ENCODE measurements at regions of chr2 and their contacts with region 1.

Region 1: DNA sequence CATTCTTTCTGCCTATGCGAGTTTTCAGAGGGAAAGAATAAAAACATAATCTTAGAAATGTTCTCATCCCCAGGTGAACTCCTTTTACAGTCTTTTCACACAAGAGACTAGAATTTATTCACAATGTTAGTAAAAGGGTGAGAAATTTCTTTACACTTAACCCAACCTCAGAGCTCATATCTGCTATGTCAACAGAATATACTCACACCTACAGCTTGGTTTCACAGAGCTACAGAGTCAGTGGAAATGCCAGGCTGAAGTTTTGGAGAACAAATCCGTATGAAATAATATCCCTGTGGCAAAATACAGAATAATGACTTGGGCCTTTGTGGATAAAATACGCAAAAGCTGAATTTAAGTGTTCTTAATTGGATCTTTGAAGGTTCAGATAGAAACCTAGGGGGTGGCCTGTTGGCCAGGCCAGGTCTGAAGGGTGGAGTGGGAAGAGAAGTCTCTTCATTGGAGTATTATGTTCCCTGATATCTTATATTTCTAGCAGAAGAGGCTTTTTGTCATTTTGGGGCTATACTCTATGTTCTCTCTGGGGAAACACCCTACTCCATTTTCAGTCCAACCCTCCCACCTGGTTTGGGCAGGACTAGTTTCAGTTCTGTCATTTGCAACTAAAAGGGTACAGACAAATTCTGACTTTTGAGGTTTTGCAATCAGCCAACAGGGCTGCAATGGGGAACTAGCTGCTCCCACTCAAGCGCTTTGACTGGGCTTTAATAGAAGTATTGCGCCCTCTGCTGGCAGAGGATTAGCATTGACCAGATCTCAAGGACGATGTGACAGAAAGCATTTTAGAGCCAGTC is 25.7 kb downstream of the FBXO48 start:
- DNase-seq: peak; percentile 85
- ATAC-seq: peak; percentile 99
- H3K4me3 ChIP-seq: no peak overlapping the region
- H3K27ac ChIP-seq: no peak overlapping the region
- H3K4me1 ChIP-seq: no peaks in the 10 kb centered on the region
- H3K27me3 ChIP-seq: peaks cover 13% of the 10 kb centered on the region
- CTCF ChIP-seq: peak; percentile 93
- POLR2A ChIP-seq: no peak
- RAD21 ChIP-seq: peak; percentile 88

Region 2: GRCh38 chr2:68121873-68122679 is 319.3 kb before region 1 on chr2:
- CTCF ChIA-PET with region 1: interaction called, 11 read pairs
- POLR2A ChIA-PET with region 1: interaction called, 4 read pairs
- dilution Hi-C with region 1: no loop called
- in situ Hi-C with region 1: loop called (anchors 5 kb)
- intact Hi-C with region 1: loop called (anchors 1 kb)
- DNase-seq: peak; percentile 88
- ATAC-seq: peak; percentile 89
- H3K4me3 ChIP-seq: no peak overlapping the region
- H3K27ac ChIP-seq: no peak overlapping the region
- H3K4me1 ChIP-seq: no peaks in the 10 kb centered on the region; the same call in none of the 2 replicates
- H3K27me3 ChIP-seq: peaks cover 1% of the 10 kb centered on the region; the same call in 1 of the 2 replicates
- CTCF ChIP-seq: peak; percentile 98
- POLR2A ChIP-seq: no peak
- RAD21 ChIP-seq: peak; percentile 96

Region 3: GRCh38 chr2:68251187-68251854 is 190.1 kb before region 1 on chr2:
- CTCF ChIA-PET with region 1: no interaction called
- POLR2A ChIA-PET with region 1: no interaction called
- dilution Hi-C with region 1: no loop called
- in situ Hi-C with region 1: no loop called
- intact Hi-C with region 1: loop called (anchors 5 kb)
- DNase-seq: peak; percentile 76
- ATAC-seq: peak; percentile 42
- H3K4me3 ChIP-seq: peak overlapping the region; percentile 98
- H3K27ac ChIP-seq: peak overlapping the region; percentile 96
- H3K4me1 ChIP-seq: peaks cover 17% of the 10 kb centered on the region
- H3K27me3 ChIP-seq: no peaks in the 10 kb centered on the region
- CTCF ChIP-seq: peak; percentile 71
- POLR2A ChIP-seq: peak; percentile 69
- RAD21 ChIP-seq: peak; percentile 60

Region 4: DNA sequence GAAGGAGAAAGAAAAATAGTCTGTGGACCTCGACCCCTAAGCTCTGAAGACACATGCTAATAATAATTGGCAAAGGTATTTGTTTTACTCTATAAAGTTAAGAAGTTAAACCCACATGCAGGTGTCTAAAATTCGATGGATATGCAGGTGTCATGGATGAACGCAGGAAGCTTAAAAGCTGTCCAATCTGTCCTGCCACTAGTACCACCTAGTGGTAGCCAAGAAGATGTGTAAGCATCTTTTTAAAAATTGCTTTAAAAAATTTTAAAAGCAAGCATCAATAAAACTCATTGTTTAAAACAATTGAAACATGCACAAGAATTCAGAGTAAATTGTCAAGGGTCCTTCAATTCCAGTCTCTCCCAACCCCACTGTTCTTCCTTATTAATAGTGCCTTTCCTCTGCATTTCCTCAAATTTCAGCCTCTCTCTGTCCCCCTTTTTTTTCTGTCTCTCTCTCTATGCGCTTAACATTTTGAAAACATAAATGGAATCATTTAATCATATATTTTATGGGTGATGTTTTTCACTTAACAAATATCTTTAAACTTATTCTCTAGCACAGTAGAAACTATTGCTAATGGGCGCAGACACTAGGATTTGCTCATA is 158.5 kb before region 1 on chr2:
- CTCF ChIA-PET with region 1: no interaction called
- POLR2A ChIA-PET with region 1: no interaction called
- dilution Hi-C with region 1: no loop called
- in situ Hi-C with region 1: no loop called
- intact Hi-C with region 1: loop called (anchors 5 kb)
- DNase-seq: peak; percentile 61
- ATAC-seq: peak; percentile 74
- H3K4me3 ChIP-seq: no peak overlapping the region
- H3K27ac ChIP-seq: no peak overlapping the region
- H3K4me1 ChIP-seq: no peaks in the 10 kb centered on the region; the same call in 1 of the 2 replicates
- H3K27me3 ChIP-seq: no peaks in the 10 kb centered on the region
- CTCF ChIP-seq: peak; percentile 83
- POLR2A ChIP-seq: no peak
- RAD21 ChIP-seq: peak; percentile 87

Region 5: DNA sequence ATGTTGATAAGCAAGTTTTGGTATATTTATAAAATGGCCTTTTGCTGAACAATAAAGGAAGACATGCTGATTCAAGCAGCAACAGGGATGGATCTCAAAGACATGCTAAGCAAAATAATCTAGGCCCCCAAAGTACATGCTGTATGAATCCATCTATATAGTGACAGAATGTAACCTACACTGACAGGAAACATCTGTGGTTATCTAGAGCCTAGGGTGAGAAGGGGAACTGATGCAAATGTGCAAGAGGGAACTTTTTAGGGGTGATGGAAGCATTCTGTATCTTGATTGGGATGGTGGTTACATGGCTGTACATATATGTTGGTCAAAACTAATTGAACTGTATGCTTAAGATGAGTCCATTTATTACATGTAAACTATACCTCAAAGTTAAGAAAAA is 145.9 kb before region 1 on chr2:
- CTCF ChIA-PET with region 1: interaction called, 5 read pairs
- POLR2A ChIA-PET with region 1: no interaction called
- dilution Hi-C with region 1: no loop called
- in situ Hi-C with region 1: loop called (anchors 10 kb)
- intact Hi-C with region 1: no loop called
- DNase-seq: no peak
- ATAC-seq: no peak
- H3K4me3 ChIP-seq: no peak overlapping the region
- H3K27ac ChIP-seq: no peak overlapping the region
- H3K4me1 ChIP-seq: no peaks in the 10 kb centered on the region
- H3K27me3 ChIP-seq: no peaks in the 10 kb centered on the region
- CTCF ChIP-seq: no peak
- POLR2A ChIP-seq: no peak
- RAD21 ChIP-seq: no peak

Region 6: DNA sequence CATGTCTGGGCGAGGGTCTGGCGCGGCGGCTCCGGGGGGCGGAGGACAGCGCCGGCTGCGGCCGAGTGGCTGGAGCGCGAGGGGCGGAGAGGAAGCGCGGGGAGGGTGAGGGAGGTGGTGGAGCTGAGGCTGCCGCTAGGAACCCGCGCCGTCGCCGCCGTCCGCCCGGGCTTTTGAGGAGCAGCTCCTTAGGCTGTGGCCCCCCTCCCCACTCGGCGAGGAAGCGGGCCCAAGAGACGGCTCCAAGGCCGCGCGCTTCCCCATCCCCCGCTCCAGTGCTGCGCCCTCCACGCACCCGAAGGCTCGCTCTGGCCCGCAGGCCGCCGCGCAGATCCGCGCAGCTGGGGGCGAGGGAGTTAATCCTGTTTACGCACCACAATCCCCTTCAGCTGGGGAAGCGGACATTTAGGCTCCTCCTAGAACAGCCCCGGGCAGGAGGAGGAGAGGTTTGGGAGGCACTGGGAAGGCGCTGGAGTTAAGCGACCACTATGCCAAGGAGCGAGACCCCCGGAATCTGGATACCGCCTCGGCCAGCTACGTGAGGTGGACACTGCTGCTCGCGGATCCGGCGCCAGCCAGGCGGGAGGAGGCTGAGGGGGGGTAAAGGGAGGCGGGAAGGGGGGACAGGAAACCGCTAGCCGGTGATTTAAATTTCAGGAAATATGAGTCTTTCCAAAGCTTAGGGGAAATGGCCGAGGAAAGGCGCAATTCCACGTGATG is 121.8 kb before region 1 on chr2 and contains the start of gene CNRIP1:
- CTCF ChIA-PET with region 1: interaction called, 6 read pairs
- POLR2A ChIA-PET with region 1: no interaction called
- dilution Hi-C with region 1: no loop called
- in situ Hi-C with region 1: no loop called
- intact Hi-C with region 1: loop called (anchors 1 kb)
- DNase-seq: peak; percentile 83
- ATAC-seq: peak; percentile 77
- H3K4me3 ChIP-seq: peak within 1 kb of the TSS; percentile 87
- H3K27ac ChIP-seq: peak within 1 kb of the TSS; percentile 98
- H3K4me1 ChIP-seq: no peaks in the 10 kb centered on the region
- H3K27me3 ChIP-seq: no peaks in the 10 kb centered on the region
- CTCF ChIP-seq: no peak
- POLR2A ChIP-seq: no peak
- RAD21 ChIP-seq: no peak
- total RNA-seq, gene CNRIP1: 23.3 and 25.6 TPM in 2 replicates

Region 7: DNA sequence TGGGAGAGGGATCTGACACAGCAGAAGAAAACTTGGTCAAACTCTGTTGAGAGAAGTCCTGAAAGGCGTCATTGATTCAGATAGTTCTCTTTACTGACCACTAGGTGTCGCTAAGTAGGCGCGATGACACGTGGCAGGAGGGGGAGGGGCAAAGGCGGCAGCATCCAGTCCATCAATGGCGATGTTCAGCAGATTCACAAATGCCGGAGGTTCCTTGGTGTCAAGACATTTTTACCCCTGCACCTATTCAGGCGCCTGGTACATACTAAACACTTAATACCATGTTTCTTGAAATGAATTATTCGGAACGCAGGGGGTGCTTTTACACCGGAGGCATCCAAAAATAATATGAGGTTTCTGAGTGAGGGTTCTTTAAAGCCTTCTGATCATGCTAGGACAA is 79.3 kb before region 1 on chr2:
- CTCF ChIA-PET with region 1: no interaction called
- POLR2A ChIA-PET with region 1: no interaction called
- dilution Hi-C with region 1: no loop called
- in situ Hi-C with region 1: no loop called
- intact Hi-C with region 1: loop called (anchors 1 kb)
- DNase-seq: peak; percentile 50
- ATAC-seq: peak; percentile 73
- H3K4me3 ChIP-seq: no peak overlapping the region
- H3K27ac ChIP-seq: no peak overlapping the region
- H3K4me1 ChIP-seq: no peaks in the 10 kb centered on the region
- H3K27me3 ChIP-seq: peaks cover 3% of the 10 kb centered on the region; the same call in 1 of the 2 replicates
- CTCF ChIP-seq: peak; percentile 69
- POLR2A ChIP-seq: no peak
- RAD21 ChIP-seq: peak; percentile 51

Measured in IMR-90 (cell line).